Dendritic cell treated with granulocyte-macrophage colony-stimulating factor and Interleukin-4, amounts not matched to agents 40 ng/mL and 50 ng/mL, for 4 days (primary cell): ENCODE measurements at regions of chr19 and their contacts with region 1.

Region 1: GRCh38 chr19:53195265-53195903 is 2.2 kb upstream of the ZNF665 start:
- H3K4me3 Mint-ChIP-seq: no peak overlapping the region
- H3K27ac Mint-ChIP-seq: no peak overlapping the region
- H3K4me1 Mint-ChIP-seq: peaks cover 26% of the 10 kb centered on the region
- H3K27me3 Mint-ChIP-seq: peaks cover 3% of the 10 kb centered on the region

Region 2: DNA sequence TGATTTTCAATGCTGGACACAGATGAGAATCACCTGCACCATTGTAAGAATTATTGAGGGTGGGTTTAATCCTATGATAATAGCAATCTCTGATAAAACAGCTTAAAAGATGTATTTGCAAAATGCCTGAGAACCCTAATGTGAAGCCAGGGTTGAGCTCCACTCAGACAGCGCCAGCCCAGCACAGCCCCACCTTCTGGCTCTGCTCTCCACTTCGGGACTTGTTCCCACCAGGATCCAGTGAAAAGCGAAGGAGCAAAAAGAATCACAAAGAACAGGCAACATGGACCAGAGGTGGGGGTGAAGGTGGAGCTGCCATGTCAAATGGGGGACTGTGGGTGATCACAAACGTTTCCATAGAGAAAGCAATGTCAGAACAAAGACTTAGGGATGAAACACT is 214.1 kb before region 1 on chr19:
- intact Hi-C with region 1: no loop called
- H3K4me3 Mint-ChIP-seq: no peak overlapping the region
- H3K27ac Mint-ChIP-seq: no peak overlapping the region
- H3K4me1 Mint-ChIP-seq: no peaks in the 10 kb centered on the region
- H3K27me3 Mint-ChIP-seq: no peaks in the 10 kb centered on the region

Region 3: DNA sequence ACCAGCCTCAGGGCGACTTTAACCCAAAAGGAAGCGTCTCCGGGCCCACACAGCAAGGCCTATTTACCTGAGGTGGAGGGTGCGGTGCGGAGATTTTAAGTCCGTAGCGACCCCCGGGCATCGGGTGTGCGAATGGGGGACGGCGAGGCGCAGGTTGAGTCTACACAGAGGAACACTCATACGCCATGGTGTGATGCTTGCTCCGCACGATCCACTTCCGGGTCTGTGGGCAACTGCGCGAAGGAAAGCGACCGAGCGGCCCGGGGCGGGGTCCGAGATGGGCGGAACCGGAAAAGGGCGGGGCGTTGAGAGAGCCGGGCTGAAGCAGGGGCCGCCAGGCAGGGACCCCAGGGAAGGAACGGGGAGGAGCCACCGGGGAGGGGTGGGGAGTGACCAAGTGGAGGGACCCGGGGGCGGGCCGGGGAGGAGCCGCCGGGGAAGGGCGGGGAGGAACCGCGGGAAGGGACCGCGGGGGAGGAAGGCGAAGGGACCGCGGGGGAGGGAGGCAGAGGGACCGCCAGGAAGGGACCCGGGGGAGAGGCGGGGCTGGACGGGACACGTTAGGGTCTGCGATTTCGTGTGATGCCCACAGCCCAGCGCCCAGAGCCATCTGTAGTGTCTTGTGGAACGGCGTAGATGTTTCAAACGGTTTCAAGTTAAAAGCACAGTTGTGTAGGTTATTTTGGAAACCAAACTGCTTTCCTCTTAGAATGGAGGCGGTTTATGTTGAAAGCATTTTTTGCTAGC is 92.0 kb before region 1 on chr19 and contains the start of gene ZNF160:
- intact Hi-C with region 1: loop called (anchors 5 kb)
- H3K4me3 Mint-ChIP-seq: peak within 1 kb of the TSS; percentile 82
- H3K27ac Mint-ChIP-seq: peak within 1 kb of the TSS; percentile 86
- H3K4me1 Mint-ChIP-seq: peaks cover 14% of the 10 kb centered on the region
- H3K27me3 Mint-ChIP-seq: peaks cover 4% of the 10 kb centered on the region

Region 4: GRCh38 chr19:53254411-53255341 is 59.3 kb after region 1 on chr19 and contains the start of gene ZNF677:
- intact Hi-C with region 1: loop called (anchors 5 kb)
- H3K4me3 Mint-ChIP-seq: peak within 1 kb of the TSS; percentile 74
- H3K27ac Mint-ChIP-seq: peak within 1 kb of the TSS; percentile 77
- H3K4me1 Mint-ChIP-seq: peaks cover 6% of the 10 kb centered on the region
- H3K27me3 Mint-ChIP-seq: peaks cover 3% of the 10 kb centered on the region

Region 5: DNA sequence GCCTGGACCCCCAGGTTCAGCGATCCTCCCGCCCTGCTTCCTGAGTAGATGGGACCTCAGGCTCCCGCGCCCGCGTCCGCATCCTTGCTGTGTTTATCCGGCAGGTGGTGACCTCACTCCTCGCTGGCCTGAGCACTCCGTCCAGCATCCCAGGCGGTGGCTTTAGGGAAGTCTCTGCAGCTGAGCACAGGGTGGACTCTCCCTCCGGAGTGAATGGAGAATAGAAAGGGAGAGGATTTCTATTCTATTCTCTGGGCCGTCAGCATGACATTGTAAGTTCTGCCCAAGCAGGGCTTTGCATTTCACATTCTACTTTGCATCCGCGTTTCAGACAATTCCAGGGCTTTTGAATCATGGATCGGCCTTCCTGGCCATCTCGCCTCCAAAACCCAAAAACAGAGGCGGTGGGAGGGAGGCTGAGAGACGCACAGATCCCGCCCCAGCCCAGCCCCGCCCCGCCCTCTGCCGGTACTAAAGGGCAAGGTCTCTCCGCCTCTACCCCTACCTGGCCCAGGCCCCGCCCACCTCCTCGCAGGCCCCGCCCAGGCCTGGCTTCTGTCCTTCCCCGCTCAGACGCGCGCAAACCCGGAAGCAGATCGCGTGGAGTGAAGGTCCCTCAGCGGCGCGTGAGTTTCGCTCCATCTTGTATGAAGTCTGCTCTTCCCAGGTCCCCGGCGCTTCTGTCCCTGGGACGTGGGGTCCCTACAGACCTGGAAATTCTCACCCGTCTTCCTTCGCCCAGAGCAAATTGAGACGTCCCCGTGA is 169.9 kb after region 1 on chr19 and contains the start of gene ZNF525:
- intact Hi-C with region 1: loop called (anchors 10 kb)
- H3K4me3 Mint-ChIP-seq: peak within 1 kb of the TSS; percentile 92
- H3K27ac Mint-ChIP-seq: peak within 1 kb of the TSS; percentile 89
- H3K4me1 Mint-ChIP-seq: peaks cover 13% of the 10 kb centered on the region
- H3K27me3 Mint-ChIP-seq: peaks cover 6% of the 10 kb centered on the region

Region 6: DNA sequence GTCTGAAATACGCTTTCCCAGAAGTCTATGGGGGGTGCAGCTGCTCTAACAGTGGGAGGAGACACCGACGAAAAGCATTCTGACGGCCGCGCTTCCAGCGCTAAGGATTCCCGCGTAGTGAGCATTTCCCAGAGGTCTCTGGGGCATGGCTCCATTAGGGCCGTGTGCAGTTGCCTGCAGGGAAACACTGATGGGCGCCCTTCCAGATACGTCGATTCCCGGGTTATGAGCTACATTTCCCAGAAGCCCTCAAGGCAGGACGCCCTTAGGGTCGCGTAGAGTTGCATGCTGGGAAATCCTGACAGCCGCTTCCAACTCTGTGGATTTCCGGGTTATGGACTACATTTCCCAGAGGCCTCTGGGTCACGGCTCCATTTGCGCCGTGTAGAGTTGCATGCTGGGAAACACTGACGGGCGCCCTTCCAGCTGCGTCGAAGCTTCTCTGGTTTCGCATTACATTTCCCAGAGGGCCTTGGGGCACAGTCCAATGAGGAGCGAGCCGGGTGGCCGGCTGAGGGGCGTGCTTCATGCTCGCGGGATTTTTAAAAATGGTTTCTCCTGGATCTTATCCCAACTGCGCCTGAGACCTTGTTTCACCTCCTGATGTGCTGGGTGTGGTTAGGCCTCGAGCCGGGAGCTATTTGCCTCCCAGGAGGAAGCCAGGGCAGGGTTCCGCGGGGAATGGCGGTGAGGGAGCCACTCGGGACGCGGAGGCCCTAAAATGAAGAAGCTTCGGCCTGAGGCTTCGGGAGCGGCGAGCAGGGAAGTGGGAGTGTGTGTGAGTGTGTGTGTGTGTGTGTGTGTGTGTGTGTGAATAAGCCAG is 325.4 kb after region 1 on chr19:
- intact Hi-C with region 1: loop called (anchors 5 kb)
- H3K4me3 Mint-ChIP-seq: peak overlapping the region; percentile 84
- H3K27ac Mint-ChIP-seq: peak overlapping the region; percentile 86
- H3K4me1 Mint-ChIP-seq: peaks cover 12% of the 10 kb centered on the region
- H3K27me3 Mint-ChIP-seq: no peaks in the 10 kb centered on the region